Heart right ventricle (tissue), 16 donors: ENCODE measurements at regions of chr9 and their contacts with region 1.

Region 1: DNA sequence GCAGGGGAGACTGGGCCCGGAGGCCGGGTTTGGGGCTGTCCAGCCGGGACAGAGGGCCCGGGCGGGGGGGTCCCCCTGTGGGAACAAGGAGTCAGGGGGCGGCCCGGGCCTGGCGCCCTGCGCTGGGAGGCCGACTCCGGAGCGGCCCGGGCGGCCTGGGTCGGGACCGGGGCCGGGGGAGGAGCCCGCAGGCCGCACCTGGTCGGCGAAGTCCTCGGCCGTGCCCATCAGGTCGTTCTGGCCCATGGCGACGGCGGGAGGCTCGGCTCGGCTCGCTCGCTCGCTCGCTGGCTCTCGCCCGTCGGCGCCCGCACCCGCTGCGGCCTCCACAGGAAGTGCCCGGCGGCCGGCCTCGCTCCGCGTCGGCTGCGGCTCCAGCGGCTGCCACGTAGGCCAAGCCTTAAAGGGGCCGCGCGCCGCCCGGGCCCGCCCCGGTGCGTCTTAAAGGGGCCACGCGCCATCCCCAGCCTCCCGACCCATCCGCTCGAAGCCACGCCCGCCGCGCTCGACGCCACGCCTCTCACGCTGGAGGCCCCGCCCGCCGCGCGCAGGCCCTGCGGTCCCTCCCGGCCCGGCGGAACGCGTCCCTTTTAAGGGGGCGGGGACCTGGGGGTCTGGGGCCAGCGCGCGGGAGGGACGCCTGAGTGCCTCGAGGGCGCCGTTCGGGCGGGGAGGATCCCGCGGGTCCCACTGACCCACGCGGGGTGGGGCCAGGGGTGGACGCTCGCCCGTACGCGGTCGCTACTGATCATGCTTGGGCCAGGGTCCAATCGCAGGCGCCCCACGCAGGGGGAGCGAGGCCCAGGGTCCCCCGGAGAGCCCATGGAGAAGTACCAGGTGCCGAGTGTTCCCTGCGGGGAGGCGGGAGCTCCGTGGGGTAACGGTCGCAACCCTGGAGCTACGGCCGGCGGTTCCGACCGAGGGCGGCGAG is at the starts of genes STKLD1 and SURF4:
- DNase-seq: peak; percentile 94 to 97
- ATAC-seq: peak; percentile 97 to 99 (median 98)
- H3K4me3 ChIP-seq: peak within 1 kb of the TSS; percentile 78 to 100 (median 96)
- H3K27ac ChIP-seq: peak within 1 kb of the TSS; percentile 76 to 99 (median 96)
- H3K4me1 ChIP-seq: peaks cover 13 to 53% (median 47%) of the 10 kb centered on the region in 9 donors
- H3K27me3 ChIP-seq: no peaks in the 10 kb centered on the region
- CTCF ChIP-seq: peak in 1 of 9 donors; percentile 13
- total RNA-seq, gene STKLD1: 0.20 to 1.7 (median 0.68) TPM in 8 of 10 donors, not detected in the others
- total RNA-seq, gene SURF4: 56.1 to 104 (median 64.2) TPM

Region 2: DNA sequence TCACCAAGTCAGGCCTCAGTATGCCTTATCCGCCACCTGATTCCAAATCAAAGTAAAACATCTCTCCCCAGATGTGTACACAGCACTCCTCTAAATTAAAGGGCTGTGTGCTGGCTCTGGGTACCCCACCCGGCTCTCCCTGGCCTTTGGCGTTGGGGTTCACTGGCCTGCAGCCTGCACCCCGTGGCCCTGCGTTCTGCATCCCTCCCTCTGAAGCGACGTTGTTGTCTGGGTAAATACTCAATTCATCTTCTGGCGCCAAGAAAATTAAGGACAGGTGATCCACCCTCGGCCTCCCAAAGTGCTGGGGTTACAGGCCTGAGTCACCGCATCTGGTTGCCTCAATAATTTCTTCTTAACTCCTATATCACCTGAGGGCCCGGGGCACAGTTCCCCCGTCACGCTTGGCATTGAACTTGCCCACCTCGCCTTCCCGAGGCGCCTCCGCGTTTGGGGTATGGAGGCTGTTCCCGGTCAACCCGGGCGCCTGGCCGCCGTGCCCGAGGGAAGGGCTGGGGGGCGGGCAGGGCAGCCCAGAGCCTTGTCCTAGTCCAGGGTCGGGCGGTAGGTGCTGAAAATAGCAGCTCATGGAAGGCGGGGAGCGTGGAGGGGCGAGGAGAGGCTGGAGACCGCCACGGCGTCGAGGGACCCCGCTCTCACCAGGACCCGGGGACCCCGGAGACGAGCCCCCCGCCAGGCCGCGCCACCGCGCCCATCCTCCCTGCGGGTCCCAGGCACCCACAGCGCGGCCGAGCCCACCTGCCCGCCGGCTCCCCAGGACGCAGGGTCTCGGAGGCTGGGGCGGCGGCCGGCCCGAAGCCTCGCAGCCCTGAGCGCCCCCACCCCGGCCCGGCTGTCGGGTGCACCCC is 101.5 kb before region 1 on chr9:
- intact Hi-C with region 1: no loop called
- DNase-seq: no peak
- ATAC-seq: peak in 7 of 8 donors; percentile 9 to 30 (median 21)
- H3K4me3 ChIP-seq: peak overlapping the region; percentile 53 to 82 (median 66)
- H3K27ac ChIP-seq: peak overlapping the region; percentile 50 to 93 (median 86)
- H3K4me1 ChIP-seq: peaks cover 0 to 23% (median 3%) of the 10 kb centered on the region in 9 donors
- H3K27me3 ChIP-seq: peaks cover 0 to 53% (median 27%) of the 10 kb centered on the region in 7 donors
- CTCF ChIP-seq: no peak

Region 3: DNA sequence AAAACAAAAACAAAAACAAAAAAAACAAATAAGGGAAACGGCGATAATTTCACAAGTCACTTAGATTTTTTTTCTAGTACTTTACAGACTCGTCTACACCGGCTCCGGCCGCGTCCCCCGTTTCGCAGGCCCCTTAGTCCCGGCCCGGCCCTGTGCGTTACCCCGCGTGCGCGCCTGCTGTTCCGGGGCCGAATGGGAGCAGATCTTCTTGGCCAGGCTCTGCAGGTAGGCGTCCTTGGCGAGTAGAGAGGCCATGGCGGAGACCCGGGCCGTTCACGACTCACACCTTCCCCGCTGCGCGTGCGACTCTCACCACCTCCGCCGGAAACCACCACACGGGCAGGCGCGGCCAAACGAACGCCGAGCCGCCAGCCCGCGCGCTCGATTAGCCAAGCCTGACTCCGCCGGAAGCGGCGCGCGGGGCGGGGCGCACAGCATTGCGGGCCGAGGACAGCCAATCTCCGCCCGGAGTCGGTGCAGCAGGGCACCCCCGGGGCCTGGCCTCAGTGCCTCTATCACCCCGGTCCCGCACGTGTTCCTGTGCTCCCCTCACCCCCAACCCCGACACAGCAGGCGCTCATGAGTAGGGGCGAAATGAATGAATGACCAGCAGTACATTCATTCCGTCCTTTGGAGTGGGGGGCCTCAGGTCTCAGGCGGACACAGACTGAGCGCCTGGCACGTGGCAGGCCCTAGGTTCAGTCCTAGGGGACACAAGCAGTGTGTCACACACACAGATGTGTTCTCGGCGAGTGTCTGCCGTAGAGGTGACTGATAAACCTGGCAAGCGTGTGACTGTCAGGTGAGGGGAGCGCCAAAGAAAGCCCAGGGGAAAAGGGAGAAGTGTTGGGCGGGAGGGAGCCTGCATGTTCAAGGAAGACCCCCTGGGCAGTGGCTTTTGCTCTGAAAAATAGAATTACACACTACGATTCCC is 39.8 kb before region 1 on chr9 and contains the start of gene SURF6:
- intact Hi-C with region 1: loop called in 3 of 10 experiments (anchors 5 kb)
- DNase-seq: peak; percentile 91
- ATAC-seq: peak; percentile 94 to 96 (median 96)
- H3K4me3 ChIP-seq: peak within 1 kb of the TSS; percentile 69 to 95 (median 82)
- H3K27ac ChIP-seq: peak within 1 kb of the TSS in 9 of 10 donors; percentile 63 to 85 (median 82)
- H3K4me1 ChIP-seq: peaks cover 4 to 56% (median 23%) of the 10 kb centered on the region in 9 donors
- H3K27me3 ChIP-seq: no peaks in the 10 kb centered on the region
- CTCF ChIP-seq: no peak
- total RNA-seq, gene SURF6: 9.1 to 14.2 (median 11.3) TPM

Region 4: DNA sequence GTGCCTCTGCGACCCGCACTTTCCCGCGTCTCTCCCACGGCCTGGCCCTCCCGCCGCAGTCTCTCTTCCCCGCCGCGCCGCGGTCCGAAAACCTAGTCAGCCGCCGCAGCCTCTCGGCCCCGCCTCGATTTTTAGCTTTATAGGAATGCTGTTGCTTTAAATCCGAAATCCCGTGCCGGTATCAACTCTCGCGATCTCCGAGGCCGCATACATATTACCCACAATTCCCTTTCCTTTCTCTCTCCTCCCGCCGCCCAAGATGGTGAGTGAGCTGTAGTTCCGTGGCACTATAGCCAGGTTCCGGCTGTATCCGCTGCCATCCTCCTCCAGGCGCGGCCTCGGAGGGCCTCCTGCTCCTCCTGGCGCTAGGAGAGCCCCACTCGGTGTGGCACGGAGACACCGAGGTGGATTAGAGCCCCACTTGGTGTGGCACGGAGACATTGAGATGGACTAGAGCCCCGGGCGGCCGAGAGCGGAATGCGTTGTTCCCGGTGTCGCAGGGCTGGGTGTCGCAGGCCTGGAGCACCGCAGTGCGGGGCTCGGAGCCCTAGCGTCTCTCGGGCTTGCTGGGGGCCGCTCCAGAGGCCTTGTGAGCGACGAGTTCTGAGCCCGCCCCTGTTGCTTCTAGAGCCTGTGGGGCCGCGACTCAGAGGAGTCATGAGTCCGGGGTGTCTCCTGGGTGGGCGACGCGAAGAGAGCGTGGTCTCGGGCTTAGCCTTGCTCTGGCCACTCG is 27.8 kb before region 1 on chr9 and contains the starts of genes MED22 and RPL7A:
- intact Hi-C with region 1: loop called in 1 of 10 experiments (anchors 2 kb)
- DNase-seq: peak; percentile 91 to 96
- ATAC-seq: peak; percentile 85 to 95 (median 92)
- H3K4me3 ChIP-seq: peak within 1 kb of the TSS; percentile 71 to 100 (median 96)
- H3K27ac ChIP-seq: peak within 1 kb of the TSS; percentile 52 to 99 (median 90)
- H3K4me1 ChIP-seq: peaks cover 5 to 34% (median 30%) of the 10 kb centered on the region in 9 donors
- H3K27me3 ChIP-seq: no peaks in the 10 kb centered on the region
- CTCF ChIP-seq: peak in 2 of 9 donors; percentile 9 to 19
- total RNA-seq, gene MED22: 11.9 to 21.1 (median 17.4) TPM
- total RNA-seq, gene RPL7A: 859 to 1,268 (median 927) TPM

Region 5: GRCh38 chr9:133359420-133360175 is 16.4 kb before region 1 on chr9:
- intact Hi-C with region 1: no loop called
- DNase-seq: no peak
- ATAC-seq: peak in 4 of 8 donors; percentile 5 to 26 (median 16)
- H3K4me3 ChIP-seq: no peak overlapping the region
- H3K27ac ChIP-seq: no peak overlapping the region
- H3K4me1 ChIP-seq: peaks cover 7 to 44% (median 28%) of the 10 kb centered on the region in 9 donors
- H3K27me3 ChIP-seq: no peaks in the 10 kb centered on the region
- CTCF ChIP-seq: peak in 7 of 9 donors; percentile 14 to 53 (median 36)

Region 6: DNA sequence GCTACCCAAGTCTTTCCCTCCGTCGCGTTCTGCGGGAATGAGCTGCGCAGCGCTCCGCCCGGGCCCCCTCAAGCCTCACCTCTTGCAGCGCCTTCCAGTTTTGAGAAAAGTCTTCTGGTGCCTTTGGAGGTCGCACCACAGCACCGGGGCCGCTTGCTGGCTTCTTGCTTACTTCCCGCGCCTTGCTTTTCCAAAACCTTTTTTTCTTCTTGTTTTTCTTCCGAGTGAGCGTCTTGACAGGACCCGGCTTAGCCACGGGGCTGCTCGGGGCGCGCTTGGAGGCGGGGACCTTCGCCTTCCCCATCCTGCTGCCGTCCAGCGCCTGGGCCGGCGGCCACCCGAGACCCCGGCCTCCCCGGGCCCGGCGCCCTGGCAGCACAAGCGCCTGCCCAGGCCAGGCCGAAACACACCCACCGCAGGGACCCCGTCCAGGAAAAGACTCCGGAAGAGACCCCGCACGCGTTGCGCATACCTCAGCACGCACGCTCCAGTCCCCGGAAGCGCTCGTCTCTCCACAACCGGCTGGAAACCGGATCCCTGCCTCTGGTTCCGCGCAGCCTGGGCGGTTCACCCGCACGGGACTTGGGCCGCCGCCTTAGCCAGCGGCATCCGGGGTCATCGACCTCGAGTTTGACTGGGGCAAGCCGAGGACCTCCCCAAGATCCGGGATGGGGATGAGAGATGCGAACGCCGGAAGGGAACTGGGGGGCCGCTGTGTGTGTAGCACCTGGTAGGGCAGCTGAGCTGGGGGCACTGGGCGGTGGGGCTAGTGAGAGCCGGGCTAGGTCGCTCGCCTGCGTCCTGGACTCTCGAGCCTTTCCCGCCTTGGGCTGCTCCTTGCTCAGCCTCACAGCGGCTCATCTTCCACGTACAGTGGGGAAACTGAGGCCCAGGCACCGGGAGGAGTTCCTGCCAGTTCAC is 41.8 kb after region 1 on chr9 and contains the start of gene REXO4:
- intact Hi-C with region 1: loop called in 2 of 10 experiments (anchors 5 kb)
- DNase-seq: peak; percentile 77 to 83
- ATAC-seq: peak; percentile 92 to 97 (median 96)
- H3K4me3 ChIP-seq: peak within 1 kb of the TSS; percentile 51 to 94 (median 82)
- H3K27ac ChIP-seq: peak within 1 kb of the TSS; percentile 35 to 93 (median 82)
- H3K4me1 ChIP-seq: peaks cover 6 to 35% (median 19%) of the 10 kb centered on the region in 9 donors
- H3K27me3 ChIP-seq: no peaks in the 10 kb centered on the region
- CTCF ChIP-seq: no peak
- total RNA-seq, gene REXO4: 9.3 to 20.8 (median 10.9) TPM